A549 (cell line): ENCODE measurements at regions of chr2 and their contacts with region 1.

Region 1: DNA sequence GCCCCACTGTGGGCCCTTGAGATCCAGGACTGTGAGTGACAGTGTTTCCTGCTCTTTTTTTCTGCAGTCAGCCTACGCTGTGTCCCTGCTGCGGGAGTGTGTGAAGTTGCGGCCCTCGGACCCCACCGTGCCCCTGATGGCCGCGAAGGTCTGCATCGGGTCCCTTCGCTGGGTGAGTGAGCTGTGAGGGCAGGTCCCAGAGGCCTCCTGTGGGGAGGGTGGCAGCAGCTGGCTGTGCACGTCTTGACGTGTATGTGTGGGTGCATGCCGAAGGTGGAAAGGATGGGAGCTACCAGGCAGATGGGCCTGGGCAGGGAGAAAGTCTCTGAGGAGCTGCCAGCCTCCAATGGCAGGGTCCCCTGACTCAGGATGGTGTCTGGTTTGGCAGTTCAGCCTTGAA is 95.7 kb upstream of the MCFD2 start:
- DNase-seq: no peak
- ATAC-seq: no peak
- H3K4me3 ChIP-seq: no peak overlapping the region
- H3K27ac ChIP-seq: no peak overlapping the region
- H3K4me1 ChIP-seq: peaks cover 28% of the 10 kb centered on the region
- CTCF ChIP-seq: no peak
- EP300 ChIP-seq: no peak
- POLR2A ChIP-seq: no peak
- RAD21 ChIP-seq: no peak

Region 2: DNA sequence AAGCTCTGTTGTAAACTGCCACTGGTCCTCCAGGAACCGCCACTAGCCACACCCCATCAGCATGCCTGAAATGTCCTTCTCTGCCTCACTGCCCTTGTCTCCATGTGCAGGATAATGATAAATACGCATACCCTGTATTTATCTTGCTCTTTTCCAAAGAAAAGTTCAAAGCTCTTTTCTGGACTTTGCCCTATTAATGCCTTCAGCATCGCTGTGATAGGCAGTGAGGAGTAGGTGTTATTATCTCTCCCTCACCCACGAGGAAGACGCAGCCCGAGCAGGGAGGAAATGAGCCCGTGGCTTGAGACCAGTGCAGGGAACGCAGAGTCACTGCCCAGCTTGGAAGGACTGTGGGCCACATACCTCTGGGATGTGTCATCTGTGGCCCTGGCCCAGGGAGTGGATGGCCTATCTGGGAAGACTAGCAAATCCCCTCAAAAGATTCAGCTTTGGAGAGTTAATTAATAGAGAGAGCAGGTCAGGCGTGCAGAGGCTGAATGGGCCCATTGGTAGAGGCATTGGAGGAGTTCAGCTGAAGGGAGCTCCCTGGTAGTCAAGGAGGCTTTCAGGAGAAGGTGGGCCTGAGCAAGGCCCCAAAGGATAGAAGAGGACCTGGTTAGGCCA is 56.2 kb before region 1 on chr2:
- CTCF ChIA-PET with region 1: no interaction called
- POLR2A ChIA-PET with region 1: no interaction called
- DNase-seq: peak; percentile 86 to 89
- ATAC-seq: peak; percentile 85 to 90
- H3K4me3 ChIP-seq: no peak overlapping the region
- H3K27ac ChIP-seq: peak overlapping the region; percentile 77 to 85
- H3K4me1 ChIP-seq: peaks cover 55% of the 10 kb centered on the region
- CTCF ChIP-seq: no peak
- EP300 ChIP-seq: no peak
- POLR2A ChIP-seq: no peak
- RAD21 ChIP-seq: 0 out of 5 replicates have a peak, but pooled peaks of 1 of the 2 experiments have one; percentile 25

Region 3: GRCh38 chr2:47021301-47022009 is 10.2 kb after region 1 on chr2:
- CTCF ChIA-PET with region 1: interaction called, 12 read pairs
- POLR2A ChIA-PET with region 1: no interaction called
- DNase-seq: no peak
- ATAC-seq: no peak
- H3K4me3 ChIP-seq: no peak overlapping the region
- H3K27ac ChIP-seq: no peak overlapping the region; a peak in 1 of 6 replicates
- H3K4me1 ChIP-seq: peaks cover 14% of the 10 kb centered on the region; the same call in 2 of the 3 replicates
- CTCF ChIP-seq: no peak
- EP300 ChIP-seq: no peak
- POLR2A ChIP-seq: no peak
- RAD21 ChIP-seq: no peak

Region 4: DNA sequence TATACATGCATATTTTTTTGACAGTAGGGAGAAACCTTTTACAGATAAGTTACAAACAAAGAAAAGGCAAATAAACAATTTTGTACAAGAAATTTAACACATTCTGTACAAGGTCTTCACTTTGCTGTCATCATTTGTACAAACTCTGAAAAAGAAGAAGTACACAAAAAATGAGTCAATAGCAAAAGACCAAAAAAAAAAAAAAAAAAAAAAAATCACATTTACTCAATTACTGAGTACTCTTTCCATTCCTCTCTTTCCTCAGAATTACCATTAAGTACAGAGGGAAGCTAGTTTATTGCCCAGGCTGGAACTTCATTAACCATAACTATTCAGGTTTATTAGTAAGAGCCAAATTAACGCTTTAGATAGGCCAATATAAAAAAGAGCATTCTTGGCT is 149.4 kb after region 1 on chr2:
- CTCF ChIA-PET with region 1: no interaction called
- POLR2A ChIA-PET with region 1: no interaction called
- DNase-seq: no peak
- ATAC-seq: no peak
- H3K4me3 ChIP-seq: no peak overlapping the region
- H3K27ac ChIP-seq: no peak overlapping the region
- H3K4me1 ChIP-seq: peaks cover 57% of the 10 kb centered on the region
- CTCF ChIP-seq: no peak
- EP300 ChIP-seq: no peak
- POLR2A ChIP-seq: no peak
- RAD21 ChIP-seq: no peak